ENCODE measurements at regions of chr17 and their contacts with region 1.

Region 1: GRCh38 chr17:51860954-51861561 is 297.5 kb downstream of the CA10 start:
- DNase-seq: no peak

Region 2: GRCh38 chr17:51813140-51813783 is 47.8 kb before region 1 on chr17:
- intact Hi-C with region 1: loop called (anchors 2 kb)
- DNase-seq: no peak

Region 3: GRCh38 chr17:51888816-51889215 is 27.8 kb after region 1 on chr17:
- intact Hi-C with region 1: no loop called
- DNase-seq: no peak

Region 4: DNA sequence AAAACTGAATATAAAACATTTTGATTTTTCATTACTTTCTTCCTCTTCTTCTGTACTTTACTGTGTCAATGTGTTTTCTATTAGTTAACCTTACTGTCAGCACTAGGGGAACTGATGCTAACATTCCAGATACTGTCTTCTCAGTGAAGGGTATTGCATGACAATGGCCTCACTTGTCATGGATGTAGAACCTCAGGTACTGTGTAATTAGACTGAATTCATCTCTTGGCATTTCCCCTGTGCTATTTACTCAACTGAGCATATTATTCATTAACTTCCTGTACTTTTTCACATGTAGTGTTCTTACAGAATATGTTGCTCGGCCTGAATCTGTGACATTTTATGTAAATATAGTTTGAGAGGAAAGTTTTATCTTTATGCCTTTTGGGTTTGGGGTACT is 60.4 kb after region 1 on chr17:
- intact Hi-C with region 1: no loop called
- DNase-seq: no peak